MCF 10A (cell line): ENCODE measurements at regions of chr6 and their contacts with region 1.

Region 1: GRCh38 chr6:166567107-166567506 is 19.4 kb downstream of the RAMACL start:
- DNase-seq: peak; percentile 97
- H3K4me3 Mint-ChIP-seq: peak overlapping the region; percentile 33
- H3K27ac Mint-ChIP-seq: peak overlapping the region; percentile 90
- H3K4me1 Mint-ChIP-seq: peaks cover 16% of the 10 kb centered on the region
- H3K27me3 Mint-ChIP-seq: no peaks in the 10 kb centered on the region
- CTCF ChIP-seq: no peak

Region 2: GRCh38 chr6:166515072-166515810 is 51.9 kb before region 1 on chr6:
- CTCF ChIA-PET with region 1: no interaction called
- POLR2A ChIA-PET with region 1: interaction called, 3 read pairs
- intact Hi-C with region 1: loop called (anchors 2 kb)
- DNase-seq: peak; percentile 83
- H3K4me3 Mint-ChIP-seq: no peak overlapping the region
- H3K27ac Mint-ChIP-seq: no peak overlapping the region
- H3K4me1 Mint-ChIP-seq: peaks cover 20% of the 10 kb centered on the region
- H3K27me3 Mint-ChIP-seq: no peaks in the 10 kb centered on the region
- CTCF ChIP-seq: peak; percentile 54

Region 3: DNA sequence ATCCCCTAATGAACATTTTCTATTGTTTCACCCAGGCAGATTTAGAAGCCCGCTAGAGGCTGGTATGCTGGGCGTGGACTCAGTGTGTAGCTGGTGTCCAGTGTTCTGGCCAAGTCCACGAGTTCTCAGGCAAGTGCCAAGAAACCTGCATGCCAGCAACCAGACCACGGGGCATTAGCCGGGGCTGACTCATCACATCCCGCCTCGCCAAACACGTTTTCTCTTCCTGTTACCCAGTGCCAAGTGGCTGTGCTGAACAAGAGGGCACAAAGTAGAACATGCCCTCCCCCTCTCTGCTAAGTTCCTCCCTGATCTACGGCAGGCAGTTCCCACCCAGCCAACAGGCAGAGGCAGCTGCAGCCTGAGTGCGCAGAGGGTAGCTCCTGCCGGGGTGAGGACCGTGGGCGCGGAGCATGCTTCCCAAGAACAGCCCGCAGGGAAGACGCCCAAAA is 10.2 kb before region 1 on chr6:
- CTCF ChIA-PET with region 1: interaction called, 10 read pairs
- POLR2A ChIA-PET with region 1: interaction called, 47 read pairs
- intact Hi-C with region 1: loop called (anchors 1 kb)
- DNase-seq: peak; percentile 99
- H3K4me3 Mint-ChIP-seq: peak overlapping the region; percentile 68
- H3K27ac Mint-ChIP-seq: peak overlapping the region; percentile 86
- H3K4me1 Mint-ChIP-seq: peaks cover 64% of the 10 kb centered on the region
- H3K27me3 Mint-ChIP-seq: no peaks in the 10 kb centered on the region
- CTCF ChIP-seq: no peak

Region 4: GRCh38 chr6:166592821-166593220 is 25.7 kb after region 1 on chr6:
- CTCF ChIA-PET with region 1: no interaction called
- POLR2A ChIA-PET with region 1: interaction called, 21 read pairs
- intact Hi-C with region 1: loop called (anchors 2 kb)
- DNase-seq: peak; percentile 76
- H3K4me3 Mint-ChIP-seq: peak overlapping the region; percentile 22
- H3K27ac Mint-ChIP-seq: peak overlapping the region; percentile 86
- H3K4me1 Mint-ChIP-seq: peaks cover 58% of the 10 kb centered on the region
- H3K27me3 Mint-ChIP-seq: no peaks in the 10 kb centered on the region
- CTCF ChIP-seq: no peak

Region 5: DNA sequence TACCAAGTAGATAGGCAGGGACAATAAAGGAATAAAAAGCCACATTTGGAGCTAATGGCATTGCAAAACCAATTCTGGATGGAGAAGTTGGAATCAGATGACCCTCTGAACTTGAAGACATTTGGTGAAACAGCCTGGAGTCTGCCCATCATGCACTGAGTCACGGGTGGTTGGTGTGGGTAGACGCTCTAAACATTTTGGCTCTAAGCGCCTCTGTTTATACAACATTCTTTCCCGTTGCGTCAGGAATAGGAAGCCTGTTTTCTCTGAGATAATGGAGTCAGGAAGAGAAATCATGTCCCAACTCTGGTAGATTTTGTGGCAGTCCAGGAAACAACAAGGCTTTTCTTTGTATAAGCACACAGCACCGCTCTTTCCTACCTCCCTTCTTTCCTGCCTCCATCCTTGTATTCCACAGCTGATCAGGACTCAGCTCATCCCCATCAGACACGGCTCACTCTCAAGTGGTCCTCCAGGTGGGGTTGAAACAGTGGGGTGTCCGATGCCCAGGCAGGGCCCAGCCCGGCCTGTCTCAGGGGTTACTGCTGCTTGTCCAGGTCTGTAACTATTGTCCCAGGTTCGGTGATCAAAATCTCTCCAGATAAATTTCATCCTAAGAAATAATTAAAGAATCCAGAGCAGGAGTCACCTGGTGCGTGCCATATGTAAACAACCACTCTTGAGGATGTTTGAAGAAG is 31.5 kb after region 1 on chr6:
- CTCF ChIA-PET with region 1: no interaction called
- POLR2A ChIA-PET with region 1: interaction called, 21 read pairs
- intact Hi-C with region 1: loop called (anchors 2 kb)
- DNase-seq: peak; percentile 91
- H3K4me3 Mint-ChIP-seq: peak overlapping the region; percentile 43
- H3K27ac Mint-ChIP-seq: peak overlapping the region; percentile 93
- H3K4me1 Mint-ChIP-seq: peaks cover 60% of the 10 kb centered on the region
- H3K27me3 Mint-ChIP-seq: no peaks in the 10 kb centered on the region
- CTCF ChIP-seq: no peak

Region 6: GRCh38 chr6:166619912-166620311 is 52.8 kb after region 1 on chr6:
- CTCF ChIA-PET with region 1: interaction called, 5 read pairs
- POLR2A ChIA-PET with region 1: interaction called, 11 read pairs
- intact Hi-C with region 1: no loop called
- DNase-seq: peak; percentile 94
- H3K4me3 Mint-ChIP-seq: peak overlapping the region; percentile 67
- H3K27ac Mint-ChIP-seq: peak overlapping the region; percentile 81
- H3K4me1 Mint-ChIP-seq: peaks cover 63% of the 10 kb centered on the region
- H3K27me3 Mint-ChIP-seq: no peaks in the 10 kb centered on the region
- CTCF ChIP-seq: no peak

Region 7: DNA sequence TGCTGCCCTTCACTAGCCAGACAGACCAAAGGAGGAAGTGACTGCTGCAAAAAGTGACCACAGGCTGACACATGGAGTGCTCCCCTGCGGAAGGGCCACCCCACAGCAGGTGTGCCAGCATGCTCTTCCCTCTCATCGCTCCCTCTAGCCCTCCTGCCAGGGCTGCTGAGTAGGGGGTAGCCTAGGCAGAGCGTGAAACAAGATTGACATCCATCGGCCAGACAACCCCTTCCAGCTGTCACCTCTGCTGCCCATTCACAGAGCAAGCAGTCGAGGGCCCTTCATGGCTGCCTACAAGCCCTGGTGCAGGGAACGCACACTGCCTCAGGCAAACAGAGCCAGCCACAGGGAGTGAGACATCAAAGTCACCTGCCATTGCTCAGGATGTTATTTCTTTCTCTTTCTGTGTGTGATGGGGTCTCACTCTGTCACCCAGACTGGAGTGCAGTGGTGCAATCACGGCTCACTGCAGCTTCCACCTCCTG is 161.9 kb after region 1 on chr6:
- CTCF ChIA-PET with region 1: no interaction called
- POLR2A ChIA-PET with region 1: no interaction called
- intact Hi-C with region 1: no loop called
- DNase-seq: no peak
- H3K4me3 Mint-ChIP-seq: no peak overlapping the region
- H3K27ac Mint-ChIP-seq: no peak overlapping the region
- H3K4me1 Mint-ChIP-seq: no peaks in the 10 kb centered on the region
- H3K27me3 Mint-ChIP-seq: peaks cover 9% of the 10 kb centered on the region
- CTCF ChIP-seq: no peak

Region 8: GRCh38 chr6:166910601-166911000 is 343.5 kb after region 1 on chr6:
- CTCF ChIA-PET with region 1: no interaction called
- POLR2A ChIA-PET with region 1: no interaction called
- intact Hi-C with region 1: no loop called
- DNase-seq: peak; percentile 49
- H3K4me3 Mint-ChIP-seq: no peak overlapping the region
- H3K27ac Mint-ChIP-seq: no peak overlapping the region
- H3K4me1 Mint-ChIP-seq: peaks cover 12% of the 10 kb centered on the region
- H3K27me3 Mint-ChIP-seq: peaks cover 13% of the 10 kb centered on the region
- CTCF ChIP-seq: no peak